Vagina (tissue), 2 donors: ENCODE measurements at regions of chr6 and their contacts with region 1.

Region 1: GRCh38 chr6:8983188-8983688 is 547.9 kb upstream of the SLC35B3 start:
- DNase-seq: no peak
- H3K4me3 ChIP-seq: no peak overlapping the region
- H3K27ac ChIP-seq: no peak overlapping the region
- H3K4me1 ChIP-seq: no peaks in the 10 kb centered on the region
- H3K27me3 ChIP-seq: no peaks in the 10 kb centered on the region
- CTCF ChIP-seq: peak; percentile 73 to 94 (median 75)
- POLR2A ChIP-seq: no peak

Region 2: DNA sequence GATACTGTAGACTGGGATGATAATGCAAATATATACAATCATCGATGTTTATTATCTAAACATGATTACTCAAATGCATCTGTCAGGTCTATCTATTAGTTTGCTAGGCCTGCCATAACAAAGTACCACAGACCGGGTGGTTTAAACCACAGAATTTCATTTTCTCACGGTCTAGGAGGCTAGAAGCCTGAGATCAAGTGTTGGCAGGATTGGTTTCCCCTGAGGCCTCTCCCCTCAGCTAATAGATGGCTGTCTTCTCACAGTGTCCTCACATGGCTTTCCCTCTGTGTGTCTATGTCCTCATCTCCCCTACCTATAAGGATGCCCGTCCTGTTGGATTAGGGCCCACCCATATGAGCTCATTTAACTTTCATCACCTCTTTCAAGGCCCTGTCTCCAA is 35.3 kb before region 1 on chr6:
- intact Hi-C with region 1: no loop called
- DNase-seq: no peak
- H3K4me3 ChIP-seq: no peak overlapping the region
- H3K27ac ChIP-seq: no peak overlapping the region
- H3K4me1 ChIP-seq: no peaks in the 10 kb centered on the region
- H3K27me3 ChIP-seq: no peaks in the 10 kb centered on the region
- CTCF ChIP-seq: no peak
- POLR2A ChIP-seq: no peak

Region 3: DNA sequence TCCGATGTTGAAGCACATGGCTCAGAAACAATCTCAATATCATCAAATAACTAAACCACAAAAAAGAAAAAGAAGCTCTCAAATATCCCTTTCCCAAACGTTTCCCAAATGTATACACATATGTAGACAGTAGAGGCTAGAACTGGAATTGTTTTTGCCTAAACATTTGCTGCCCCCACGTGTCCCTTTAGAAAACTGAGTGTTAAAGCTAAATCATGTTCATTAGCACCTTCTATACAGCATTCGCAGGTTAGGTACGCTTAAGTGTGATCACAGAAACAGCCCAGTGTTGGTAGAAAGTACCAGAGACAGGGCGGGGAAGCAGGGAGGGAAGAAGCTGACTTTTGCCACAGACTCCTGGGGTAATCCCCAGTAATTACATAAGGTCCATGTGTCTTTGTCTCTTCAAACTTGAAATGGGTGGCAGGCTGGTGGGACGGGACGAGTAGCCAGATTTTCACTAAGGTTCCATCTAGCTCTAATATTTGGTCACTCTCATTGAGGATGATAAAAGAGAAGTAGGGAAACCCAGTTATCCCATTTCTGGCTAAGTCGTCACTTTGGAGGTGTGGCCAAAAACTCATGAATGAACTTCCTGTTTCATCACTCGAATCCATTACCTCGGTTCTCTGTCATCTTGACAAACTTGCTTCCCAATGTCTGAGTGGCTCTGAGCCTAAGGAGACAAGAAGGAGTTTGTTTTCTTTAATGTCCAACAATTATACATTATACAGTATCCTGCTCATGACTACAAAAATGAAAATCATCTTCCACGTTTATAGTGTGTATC is 1446.6 kb after region 1 on chr6:
- intact Hi-C with region 1: loop called (anchors 10 kb)
- DNase-seq: no peak
- H3K4me3 ChIP-seq: no peak overlapping the region
- H3K27ac ChIP-seq: no peak overlapping the region
- H3K4me1 ChIP-seq: peaks cover 20% of the 10 kb centered on the region
- H3K27me3 ChIP-seq: no peaks in the 10 kb centered on the region
- CTCF ChIP-seq: peak in 1 of 3 experiments; percentile 56
- POLR2A ChIP-seq: no peak